H1 (cell line): ENCODE measurements at regions of chr17 and their contacts with region 1.

Region 1: GRCh38 chr17:43846221-43846712 is 709 bp upstream of the CD300LG start:
- DNase-seq: peak; percentile 77 to 100
- H3K4me3 ChIP-seq: peak overlapping the region in 1 of 4 experiments; percentile 46; a peak in 1 of 8 replicates
- H3K27ac ChIP-seq: no peak overlapping the region
- H3K4me1 ChIP-seq: peaks cover 0 to 5% (median 1%) of the 10 kb centered on the region in 4 experiments; a peak in 2 of 7 replicates
- H3K27me3 ChIP-seq: peaks cover 0 to 3% (median 0%) of the 10 kb centered on the region in 4 experiments; a peak in 2 of 7 replicates
- CTCF ChIP-seq: peak; percentile 97 to 98 (median 97)
- EP300 ChIP-seq: no peak
- POLR2A ChIP-seq: no peak
- RAD21 ChIP-seq: peak; percentile 80 to 92

Region 2: GRCh38 chr17:43667947-43668348 is 178.3 kb before region 1 on chr17:
- CTCF ChIA-PET with region 1: no interaction called
- POLR2A ChIA-PET with region 1: no interaction called
- DNase-seq: no peak
- H3K4me3 ChIP-seq: no peak overlapping the region
- H3K27ac ChIP-seq: no peak overlapping the region
- H3K4me1 ChIP-seq: peaks cover 3 to 13% (median 10%) of the 10 kb centered on the region in 4 experiments
- H3K27me3 ChIP-seq: no peaks in the 10 kb centered on the region
- CTCF ChIP-seq: no peak
- EP300 ChIP-seq: no peak
- POLR2A ChIP-seq: no peak
- RAD21 ChIP-seq: no peak

Region 3: DNA sequence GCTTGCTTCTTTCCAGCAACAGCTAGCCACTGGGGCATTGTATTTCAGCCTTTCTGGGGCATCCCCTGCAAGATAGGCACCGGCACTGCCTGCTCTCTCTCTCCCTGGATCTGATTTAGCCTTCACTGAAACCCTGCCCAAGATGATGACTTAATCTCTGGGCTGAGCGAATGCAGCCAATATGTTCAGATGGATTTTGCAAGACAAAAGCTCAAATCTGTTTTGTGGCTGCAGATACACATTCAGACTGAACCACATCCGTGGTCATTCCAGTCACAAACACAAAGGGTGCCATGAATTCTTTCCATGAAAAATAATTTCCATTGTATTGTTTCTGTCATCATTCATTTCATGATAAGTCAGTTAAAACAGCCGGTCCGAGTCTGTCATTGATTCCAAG is 111.9 kb before region 1 on chr17:
- CTCF ChIA-PET with region 1: no interaction called
- POLR2A ChIA-PET with region 1: no interaction called
- DNase-seq: no peak
- H3K4me3 ChIP-seq: no peak overlapping the region
- H3K27ac ChIP-seq: no peak overlapping the region
- H3K4me1 ChIP-seq: peaks cover 0 to 8% (median 2%) of the 10 kb centered on the region in 4 experiments; a peak in 3 of 7 replicates
- H3K27me3 ChIP-seq: no peaks in the 10 kb centered on the region
- CTCF ChIP-seq: no peak
- EP300 ChIP-seq: no peak
- POLR2A ChIP-seq: no peak
- RAD21 ChIP-seq: no peak

Region 4: DNA sequence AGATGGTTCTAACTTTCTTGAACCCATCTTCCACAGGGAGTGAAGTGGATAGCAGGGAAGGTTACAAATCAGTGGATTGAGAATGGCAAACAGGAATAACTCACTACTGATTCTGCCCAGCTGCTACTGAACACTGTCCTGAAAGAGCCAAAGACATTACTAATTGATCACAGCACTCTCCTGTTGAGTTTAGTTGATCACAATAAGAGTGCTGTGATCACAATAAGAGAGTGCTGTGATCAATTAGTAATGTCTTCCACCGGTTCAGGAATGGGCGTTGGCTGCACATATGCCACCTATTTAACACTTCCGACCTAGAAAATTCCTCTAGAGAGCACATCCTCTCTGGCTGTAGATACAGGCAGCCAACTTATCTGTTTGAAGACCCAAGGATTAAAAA is 54.7 kb before region 1 on chr17:
- CTCF ChIA-PET with region 1: interaction called, 26 read pairs
- POLR2A ChIA-PET with region 1: interaction called, 8 read pairs
- DNase-seq: no peak
- H3K4me3 ChIP-seq: peak overlapping the region in 1 of 4 experiments; percentile 17; a peak in 1 of 8 replicates
- H3K27ac ChIP-seq: no peak overlapping the region
- H3K4me1 ChIP-seq: no peaks in the 10 kb centered on the region; a peak in 1 of 7 replicates
- H3K27me3 ChIP-seq: no peaks in the 10 kb centered on the region
- CTCF ChIP-seq: no peak
- EP300 ChIP-seq: no peak
- POLR2A ChIP-seq: no peak
- RAD21 ChIP-seq: no peak

Region 5: DNA sequence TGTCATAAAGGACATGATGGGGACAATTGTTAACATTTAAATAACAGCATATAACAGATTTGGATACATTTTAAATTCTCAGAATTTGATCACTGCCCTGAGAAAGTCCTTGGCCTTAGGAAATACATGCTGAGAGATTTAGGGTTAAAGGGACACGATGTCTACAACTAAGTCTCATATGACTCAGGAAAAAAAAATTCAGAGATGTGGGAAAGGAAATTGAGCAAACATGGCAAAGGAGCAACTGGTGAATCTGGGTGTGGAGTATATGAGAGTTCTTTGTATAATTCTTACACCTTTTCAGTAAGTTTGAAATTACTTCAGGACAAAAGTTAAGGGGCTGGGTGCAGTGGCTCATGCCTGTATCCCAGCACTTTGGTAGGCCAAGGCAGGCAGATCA is 31.6 kb before region 1 on chr17:
- CTCF ChIA-PET with region 1: interaction called, 20 read pairs
- POLR2A ChIA-PET with region 1: interaction called, 3 read pairs
- DNase-seq: no peak
- H3K4me3 ChIP-seq: no peak overlapping the region
- H3K27ac ChIP-seq: no peak overlapping the region
- H3K4me1 ChIP-seq: peaks cover 0 to 4% (median 1%) of the 10 kb centered on the region in 4 experiments; a peak in 1 of 7 replicates
- H3K27me3 ChIP-seq: no peaks in the 10 kb centered on the region
- CTCF ChIP-seq: no peak
- EP300 ChIP-seq: no peak
- POLR2A ChIP-seq: no peak
- RAD21 ChIP-seq: no peak

Region 6: DNA sequence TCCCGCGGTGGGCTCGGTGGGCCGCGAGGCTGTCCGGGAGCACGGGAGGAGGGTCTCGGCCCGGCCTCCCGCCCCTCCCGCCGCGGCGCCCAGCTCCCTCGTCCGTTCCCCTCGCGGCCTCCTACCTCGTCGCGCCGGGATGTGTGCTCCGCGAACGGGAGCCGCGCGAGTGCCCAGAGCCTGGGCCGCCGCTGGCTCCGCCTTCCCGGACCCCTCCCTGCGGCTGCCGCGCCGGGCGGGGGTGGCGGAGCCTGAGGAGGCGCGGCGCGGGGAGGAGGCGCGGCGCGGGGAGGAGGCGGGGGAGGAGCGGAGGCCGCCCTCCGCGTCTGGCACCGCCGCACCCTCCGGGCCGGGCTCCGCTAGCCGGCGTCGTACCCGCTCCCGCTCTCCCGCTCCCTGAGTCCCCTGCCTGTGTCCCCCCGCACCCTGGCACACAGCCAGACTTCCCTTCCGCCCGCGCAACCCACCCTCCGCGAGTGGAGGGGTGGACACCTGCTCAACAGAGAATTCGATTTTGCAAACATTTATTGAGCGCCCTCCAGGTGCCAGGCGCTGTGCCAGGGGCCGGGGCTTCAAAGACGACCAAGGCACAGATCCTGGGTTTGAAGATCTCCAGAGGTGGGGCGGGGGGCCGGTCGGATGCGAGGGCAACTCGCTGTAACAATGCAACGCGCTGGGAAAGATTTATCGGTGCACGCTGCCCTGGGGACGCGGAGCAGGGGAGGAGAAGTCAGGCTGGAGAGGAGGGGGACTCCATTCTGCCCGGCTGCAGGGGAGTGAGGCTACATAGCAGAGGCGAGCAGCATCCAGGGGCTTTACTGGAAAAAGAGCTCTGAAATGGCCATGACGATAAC is 13.1 kb before region 1 on chr17 and contains the start of gene MPP3:
- CTCF ChIA-PET with region 1: interaction called, 11 read pairs
- POLR2A ChIA-PET with region 1: interaction called, 3 read pairs
- DNase-seq: peak in 1 of 2 experiments; percentile 68
- H3K4me3 ChIP-seq: peak within 1 kb of the TSS; percentile 44 to 87 (median 57)
- H3K27ac ChIP-seq: no peak within 1 kb of the TSS
- H3K4me1 ChIP-seq: peaks cover 0 to 11% (median 6%) of the 10 kb centered on the region in 4 experiments; a peak in 5 of 7 replicates
- H3K27me3 ChIP-seq: peaks cover 0 to 15% (median 13%) of the 10 kb centered on the region in 4 experiments; a peak in 6 of 7 replicates
- CTCF ChIP-seq: no peak
- EP300 ChIP-seq: no peak
- POLR2A ChIP-seq: no peak
- RAD21 ChIP-seq: no peak
- total RNA-seq, gene MPP3: 5.5 and 6.1 TPM in 2 replicates

Region 7: GRCh38 chr17:43861024-43861621 is 14.9 kb after region 1 on chr17:
- CTCF ChIA-PET with region 1: interaction called, 27 read pairs
- POLR2A ChIA-PET with region 1: interaction called, 3 read pairs
- DNase-seq: no peak
- H3K4me3 ChIP-seq: no peak overlapping the region
- H3K27ac ChIP-seq: no peak overlapping the region
- H3K4me1 ChIP-seq: peaks cover 0 to 4% (median under 1%) of the 10 kb centered on the region in 4 experiments; a peak in 3 of 7 replicates
- H3K27me3 ChIP-seq: no peaks in the 10 kb centered on the region
- CTCF ChIP-seq: no peak
- EP300 ChIP-seq: no peak
- POLR2A ChIP-seq: no peak
- RAD21 ChIP-seq: no peak

Region 8: GRCh38 chr17:43958953-43959352 is 112.7 kb after region 1 on chr17:
- CTCF ChIA-PET with region 1: no interaction called
- POLR2A ChIA-PET with region 1: no interaction called
- DNase-seq: no peak
- H3K4me3 ChIP-seq: no peak overlapping the region
- H3K27ac ChIP-seq: no peak overlapping the region
- H3K4me1 ChIP-seq: peaks cover 0 to 1% (median 0%) of the 10 kb centered on the region in 4 experiments; a peak in 1 of 7 replicates
- H3K27me3 ChIP-seq: peaks cover 0 to 7% (median 7%) of the 10 kb centered on the region in 4 experiments; a peak in 4 of 7 replicates
- CTCF ChIP-seq: no peak
- EP300 ChIP-seq: no peak
- POLR2A ChIP-seq: no peak
- RAD21 ChIP-seq: no peak